HepG2 (cell line): ENCODE measurements at regions of chr14 and their contacts with region 1.

Region 1: DNA sequence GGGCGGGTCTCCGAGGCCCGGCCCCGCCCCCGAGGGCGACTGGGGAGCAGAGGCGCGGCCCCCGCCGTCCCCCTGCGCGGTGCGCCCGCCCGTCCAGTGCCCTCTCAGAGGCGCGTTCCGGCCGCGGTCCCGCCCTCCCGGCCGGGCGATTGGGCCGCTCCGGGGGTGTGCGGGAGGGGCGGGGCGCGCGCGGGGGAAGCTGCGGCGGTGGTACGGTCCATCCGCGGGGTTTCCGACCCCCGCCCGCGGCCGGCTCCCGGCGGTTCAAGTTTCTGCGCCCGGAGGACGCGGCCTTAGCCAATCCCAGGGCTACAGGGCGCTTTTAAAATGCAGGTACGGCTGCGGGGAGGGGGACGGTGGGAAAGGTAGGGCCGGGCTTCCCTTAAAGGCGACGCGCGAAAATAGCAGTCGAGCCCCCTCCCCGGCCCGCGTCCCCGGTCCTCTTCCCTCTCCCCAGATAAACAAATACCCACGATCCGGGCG is 317 bp upstream of the CCDC85C start:
- DNase-seq: peak; percentile 81
- ATAC-seq: peak; percentile 79
- H3K4me3 ChIP-seq: peak overlapping the region; percentile 70 to 89 (median 83)
- H3K27ac ChIP-seq: peak overlapping the region; percentile 81
- H3K4me1 ChIP-seq: peaks cover 44% of the 10 kb centered on the region
- H3K27me3 ChIP-seq: no peaks in the 10 kb centered on the region; a peak in 1 of 5 replicates
- CTCF ChIP-seq: no peak
- EP300 ChIP-seq: no peak
- POLR2A ChIP-seq: peak in 1 of 2 experiments; percentile 43; a peak in 1 of 4 replicates
- RAD21 ChIP-seq: no peak

Region 2: DNA sequence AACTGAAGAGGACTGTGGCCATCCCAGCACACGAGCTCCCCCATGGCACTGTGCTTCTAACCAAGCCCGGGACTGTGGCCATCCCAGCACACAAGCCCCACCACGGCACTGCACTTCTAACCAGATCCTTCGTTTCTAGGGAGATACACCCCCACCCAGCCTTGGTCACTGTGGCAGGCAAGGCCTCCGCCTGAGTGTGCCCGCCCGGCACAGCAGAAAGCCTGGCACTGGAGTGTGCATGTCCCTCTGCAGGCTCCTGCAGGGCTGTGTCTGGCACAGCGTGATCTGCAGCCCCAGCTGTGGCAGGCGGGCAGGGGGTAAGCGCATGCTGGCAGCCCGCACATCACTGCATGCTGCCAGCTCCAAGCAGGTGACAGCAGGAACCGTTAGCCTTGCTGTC is 50.1 kb before region 1 on chr14:
- CTCF ChIA-PET with region 1: interaction called, 3 read pairs
- POLR2A ChIA-PET with region 1: interaction called, 101 read pairs
- in situ Hi-C with region 1: no loop called
- intact Hi-C with region 1: no loop called
- DNase-seq: no peak
- ATAC-seq: peak; percentile 29
- H3K4me3 ChIP-seq: peak overlapping the region in 1 of 3 experiments; percentile 56; a peak in 1 of 6 replicates
- H3K27ac ChIP-seq: peak overlapping the region; percentile 85
- H3K4me1 ChIP-seq: peaks cover 95% of the 10 kb centered on the region
- H3K27me3 ChIP-seq: no peaks in the 10 kb centered on the region
- CTCF ChIP-seq: 0 out of 2 replicates have a peak, but pooled peaks have one; percentile 19
- EP300 ChIP-seq: no peak
- POLR2A ChIP-seq: no peak
- RAD21 ChIP-seq: no peak

Region 3: GRCh38 chr14:99563233-99564129 is 40.8 kb before region 1 on chr14:
- CTCF ChIA-PET with region 1: no interaction called
- POLR2A ChIA-PET with region 1: interaction called, 7 read pairs
- in situ Hi-C with region 1: loop called (anchors 5 kb)
- intact Hi-C with region 1: loop called (anchors 1 kb)
- DNase-seq: peak; percentile 84
- ATAC-seq: peak; percentile 82
- H3K4me3 ChIP-seq: no peak overlapping the region
- H3K27ac ChIP-seq: peak overlapping the region; percentile 91
- H3K4me1 ChIP-seq: peaks cover 92% of the 10 kb centered on the region
- H3K27me3 ChIP-seq: no peaks in the 10 kb centered on the region
- CTCF ChIP-seq: peak; percentile 94
- EP300 ChIP-seq: no peak
- POLR2A ChIP-seq: no peak
- RAD21 ChIP-seq: peak; percentile 96

Region 4: DNA sequence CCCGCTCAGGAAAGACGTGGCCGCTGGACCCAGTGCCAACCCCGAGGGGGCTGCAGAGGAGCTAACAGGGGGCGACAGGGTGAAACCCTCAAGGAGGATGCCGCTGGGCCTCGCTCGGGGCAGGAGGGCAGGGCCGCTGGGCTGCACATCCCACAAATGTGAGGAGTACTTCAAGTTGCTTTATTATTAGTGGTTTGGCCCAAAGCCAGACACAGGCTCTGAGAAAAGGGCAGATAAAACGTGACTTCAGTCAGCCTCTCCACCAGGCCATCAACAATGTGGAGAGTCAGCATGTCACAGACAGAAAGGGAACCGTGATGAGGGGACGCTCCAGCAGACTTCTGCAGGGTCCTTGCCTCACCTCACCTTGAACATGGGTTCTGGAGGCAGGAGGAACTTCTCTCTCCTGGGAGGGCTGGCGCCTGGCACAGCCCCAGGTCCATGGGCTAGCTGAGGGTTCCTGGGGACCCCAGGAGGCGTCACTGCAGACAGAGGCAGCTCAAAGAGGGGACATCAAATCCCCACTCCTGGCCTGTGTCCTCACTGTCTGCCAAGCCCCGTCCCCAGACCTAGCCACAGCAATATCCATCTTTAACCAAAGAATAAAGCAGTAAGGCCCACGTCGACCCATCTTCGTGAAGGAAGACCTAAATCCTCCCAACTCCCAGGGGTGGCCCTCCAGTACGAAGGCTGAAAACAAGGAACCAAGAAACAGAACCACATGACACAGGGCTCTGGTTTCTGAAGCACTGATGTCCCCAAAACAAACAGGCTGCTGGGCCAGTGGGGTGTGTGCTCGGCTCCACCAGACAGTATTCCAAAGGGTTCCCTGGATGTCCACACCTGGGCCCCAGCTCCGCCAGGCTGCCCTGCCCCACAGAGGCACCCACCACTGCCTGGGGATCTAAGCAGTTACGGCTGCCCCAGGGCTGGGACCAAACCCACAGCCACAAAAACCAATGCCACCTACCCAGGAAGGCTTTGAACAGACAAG is 35.5 kb before region 1 on chr14:
- CTCF ChIA-PET with region 1: no interaction called
- POLR2A ChIA-PET with region 1: interaction called, 11 read pairs
- in situ Hi-C with region 1: loop called (anchors 5 kb)
- intact Hi-C with region 1: loop called (anchors 1 kb)
- DNase-seq: no peak
- ATAC-seq: no peak
- H3K4me3 ChIP-seq: no peak overlapping the region
- H3K27ac ChIP-seq: peak overlapping the region; percentile 91
- H3K4me1 ChIP-seq: peaks cover 100% of the 10 kb centered on the region
- H3K27me3 ChIP-seq: no peaks in the 10 kb centered on the region
- CTCF ChIP-seq: no peak
- EP300 ChIP-seq: no peak
- POLR2A ChIP-seq: no peak
- RAD21 ChIP-seq: no peak

Region 5: DNA sequence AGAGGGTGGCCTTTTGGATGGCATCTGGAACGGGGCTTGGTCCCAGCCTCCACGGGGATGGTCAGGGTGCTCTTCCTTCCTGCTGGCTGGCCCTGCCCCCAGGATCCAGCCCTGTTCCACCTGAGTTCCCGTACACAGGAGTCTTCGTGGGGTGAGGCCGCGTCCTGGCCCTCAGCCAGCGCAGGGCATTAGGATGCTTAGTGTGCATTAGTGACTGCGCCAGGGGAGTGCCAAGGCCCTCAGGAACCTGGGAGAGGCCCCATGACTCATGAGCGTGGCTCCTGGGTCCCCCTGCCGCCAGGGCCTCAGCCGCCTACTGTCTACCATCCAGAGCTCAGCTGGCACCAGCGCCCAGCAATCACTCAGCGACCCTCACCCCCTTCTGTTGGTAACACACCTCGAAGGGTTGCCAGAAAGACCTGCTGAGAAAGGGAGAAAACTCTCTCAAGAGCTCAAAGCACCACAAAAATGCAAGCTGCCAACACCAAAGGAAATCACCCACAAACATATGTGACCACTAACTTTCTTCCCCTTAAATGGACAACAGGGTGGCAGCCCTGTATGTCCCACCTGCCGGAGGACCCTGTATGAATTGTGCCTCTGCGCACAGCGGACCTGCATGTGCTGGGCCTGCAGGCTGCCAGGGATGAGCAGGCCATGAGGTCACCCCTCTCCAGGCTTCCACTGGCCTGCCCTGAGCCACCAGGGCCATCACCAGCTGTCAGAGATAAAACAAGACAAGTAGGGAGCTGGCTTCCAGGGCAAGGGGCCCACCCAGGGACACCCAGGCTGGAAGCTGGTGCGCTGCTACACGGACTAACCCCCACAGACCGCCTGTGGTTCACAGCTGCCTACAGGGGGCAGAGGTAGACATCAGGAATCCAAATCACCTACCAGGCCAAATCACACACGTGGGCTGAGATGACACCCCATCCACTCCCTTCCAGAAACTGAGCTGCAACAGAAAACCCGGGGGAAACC is 29.0 kb before region 1 on chr14:
- CTCF ChIA-PET with region 1: no interaction called
- POLR2A ChIA-PET with region 1: interaction called, 11 read pairs
- in situ Hi-C with region 1: no loop called
- intact Hi-C with region 1: no loop called
- DNase-seq: peak; percentile 52
- ATAC-seq: peak; percentile 58
- H3K4me3 ChIP-seq: peak overlapping the region in 1 of 3 experiments; percentile 44; a peak in 1 of 6 replicates
- H3K27ac ChIP-seq: peak overlapping the region; percentile 64
- H3K4me1 ChIP-seq: peaks cover 73% of the 10 kb centered on the region
- H3K27me3 ChIP-seq: no peaks in the 10 kb centered on the region; a peak in 1 of 5 replicates
- CTCF ChIP-seq: peak; percentile 61
- EP300 ChIP-seq: no peak
- POLR2A ChIP-seq: no peak
- RAD21 ChIP-seq: 0 out of 2 replicates have a peak, but pooled peaks have one; percentile 25

Region 6: DNA sequence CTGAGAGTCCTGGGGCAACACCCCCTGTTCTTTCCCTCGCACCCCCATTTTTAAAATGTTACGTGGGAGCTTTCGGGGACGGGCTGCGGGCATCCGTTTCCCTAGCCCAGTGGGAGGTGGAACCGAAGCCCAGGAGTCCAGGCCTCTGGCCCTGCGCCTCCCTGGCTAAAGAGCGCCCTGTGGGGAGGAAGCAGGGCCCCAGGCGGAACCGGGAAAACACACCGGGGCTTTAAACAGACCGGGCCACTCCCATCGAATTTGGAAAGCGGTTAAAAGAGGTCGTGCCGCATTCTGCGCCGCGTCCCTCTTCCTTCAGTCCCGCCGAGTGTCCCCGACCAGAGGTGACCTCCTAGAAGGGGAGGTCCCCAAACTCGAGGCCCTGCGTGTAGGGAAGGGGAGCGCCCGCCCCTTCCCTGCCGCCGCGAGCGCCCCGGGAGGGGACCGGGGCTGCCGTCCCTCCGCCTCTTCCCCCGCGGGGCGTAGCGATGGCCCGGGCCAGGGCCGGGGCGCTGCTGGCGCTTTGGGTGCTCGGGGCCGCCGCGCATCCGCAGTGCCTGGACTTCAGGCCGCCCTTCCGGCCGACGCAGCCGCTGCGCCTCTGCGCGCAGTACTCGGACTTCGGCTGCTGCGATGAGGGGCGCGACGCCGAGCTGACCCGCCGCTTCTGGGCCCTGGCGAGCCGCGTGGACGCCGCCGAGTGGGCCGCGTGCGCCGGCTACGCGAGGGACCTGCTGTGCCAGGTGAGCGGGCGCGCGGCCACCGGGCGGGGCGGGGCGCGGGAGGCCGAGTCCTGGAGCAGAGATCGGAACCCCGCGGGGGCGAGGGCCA is 40.6 kb after region 1 on chr14 and contains the start of gene HHIPL1:
- CTCF ChIA-PET with region 1: no interaction called
- POLR2A ChIA-PET with region 1: no interaction called
- in situ Hi-C with region 1: no loop called
- intact Hi-C with region 1: no loop called
- DNase-seq: no peak
- ATAC-seq: no peak
- H3K4me3 ChIP-seq: no peak within 1 kb of the TSS
- H3K27ac ChIP-seq: no peak within 1 kb of the TSS
- H3K4me1 ChIP-seq: peaks cover 13% of the 10 kb centered on the region
- H3K27me3 ChIP-seq: peaks cover 2 to 5% of the 10 kb centered on the region in 2 experiments; a peak in 2 of 5 replicates
- CTCF ChIP-seq: no peak
- EP300 ChIP-seq: no peak
- POLR2A ChIP-seq: no peak
- RAD21 ChIP-seq: no peak
- total RNA-seq, gene HHIPL1: not detected in 2 replicates

Region 7: GRCh38 chr14:99872786-99873440 is 268.6 kb after region 1 on chr14:
- CTCF ChIA-PET with region 1: no interaction called
- POLR2A ChIA-PET with region 1: no interaction called
- in situ Hi-C with region 1: no loop called
- intact Hi-C with region 1: no loop called
- DNase-seq: no peak
- ATAC-seq: no peak
- H3K4me3 ChIP-seq: no peak overlapping the region
- H3K27ac ChIP-seq: no peak overlapping the region
- H3K4me1 ChIP-seq: no peaks in the 10 kb centered on the region
- H3K27me3 ChIP-seq: no peaks in the 10 kb centered on the region
- CTCF ChIP-seq: no peak
- EP300 ChIP-seq: no peak
- POLR2A ChIP-seq: no peak
- RAD21 ChIP-seq: no peak